Colonic mucosa (tissue), 4 donors: ENCODE measurements at regions of chr1 and their contacts with region 1.

Region 1: GRCh38 chr1:172745014-172745413 is 86.1 kb downstream of the FASLG start:
- DNase-seq: peak; percentile 53
- H3K4me3 ChIP-seq: no peak overlapping the region
- H3K27ac ChIP-seq: no peak overlapping the region
- H3K4me1 ChIP-seq: peaks cover 4% of the 10 kb centered on the region
- H3K27me3 ChIP-seq: no peaks in the 10 kb centered on the region
- CTCF ChIP-seq: peak; percentile 60

Region 2: DNA sequence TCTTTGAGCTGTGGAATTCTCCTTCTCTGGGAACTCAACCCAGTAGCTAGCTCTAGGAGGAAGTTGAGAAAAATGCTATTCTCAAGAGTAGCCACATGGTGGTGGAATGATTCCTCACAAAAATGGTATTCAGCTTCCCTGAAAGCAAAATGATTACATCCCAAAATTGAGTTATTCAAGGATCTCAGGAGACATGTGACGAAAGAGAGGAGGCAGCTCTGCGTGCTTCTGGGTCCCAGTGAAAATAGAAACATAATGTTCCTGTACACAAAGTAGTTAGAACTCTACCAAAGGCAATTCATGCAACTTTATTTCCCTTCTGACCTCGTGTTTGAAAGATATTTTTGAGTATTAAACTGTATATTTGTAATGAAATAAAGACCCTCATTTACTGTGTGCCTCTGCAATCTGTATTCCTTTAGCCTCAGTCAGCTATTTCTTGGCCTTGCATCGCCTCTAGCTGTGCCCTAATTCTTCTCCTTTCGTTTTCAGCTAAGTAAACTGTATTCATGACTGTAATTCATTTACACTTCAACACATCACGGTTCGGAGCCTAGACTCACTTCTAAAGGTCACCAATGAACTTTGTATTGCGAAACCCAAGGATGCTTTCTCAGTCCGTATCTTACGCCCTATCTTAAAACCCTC is 81.2 kb after region 1 on chr1:
- intact Hi-C with region 1: loop called (anchors 2 kb)
- DNase-seq: peak; percentile 23
- H3K4me3 ChIP-seq: no peak overlapping the region
- H3K27ac ChIP-seq: peak overlapping the region; percentile 13
- H3K4me1 ChIP-seq: no peaks in the 10 kb centered on the region
- H3K27me3 ChIP-seq: no peaks in the 10 kb centered on the region
- CTCF ChIP-seq: peak; percentile 41

Region 3: DNA sequence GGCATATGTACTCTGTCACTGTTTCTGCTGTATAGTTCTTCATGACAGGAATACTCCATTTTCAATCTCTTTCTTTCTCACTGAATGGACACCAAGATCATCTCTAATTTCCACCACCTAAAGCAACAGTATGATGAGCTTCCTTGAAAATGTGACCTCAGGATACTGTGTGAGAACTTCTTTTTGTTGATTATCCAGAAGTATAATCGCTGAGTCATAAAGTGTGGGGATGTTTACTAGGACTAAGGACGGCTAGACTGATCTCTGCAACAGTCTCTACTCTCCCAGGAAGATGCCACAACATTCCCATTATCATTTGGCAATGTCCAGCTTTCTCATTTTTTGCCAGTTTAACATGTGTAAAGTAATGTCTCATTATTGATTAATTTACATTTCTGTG is 235.4 kb after region 1 on chr1:
- intact Hi-C with region 1: no loop called
- DNase-seq: no peak
- H3K4me3 ChIP-seq: no peak overlapping the region
- H3K27ac ChIP-seq: no peak overlapping the region
- H3K4me1 ChIP-seq: no peaks in the 10 kb centered on the region
- H3K27me3 ChIP-seq: no peaks in the 10 kb centered on the region
- CTCF ChIP-seq: no peak

Region 4: GRCh38 chr1:173202430-173203145 is 457.6 kb after region 1 on chr1:
- intact Hi-C with region 1: loop called (anchors 2 kb)
- DNase-seq: peak; percentile 38
- H3K4me3 ChIP-seq: no peak overlapping the region
- H3K27ac ChIP-seq: no peak overlapping the region
- H3K4me1 ChIP-seq: no peaks in the 10 kb centered on the region
- H3K27me3 ChIP-seq: no peaks in the 10 kb centered on the region
- CTCF ChIP-seq: peak; percentile 38

Region 5: GRCh38 chr1:173409613-173410012 is 664.6 kb after region 1 on chr1:
- intact Hi-C with region 1: loop called (anchors 10 kb)
- DNase-seq: no peak
- H3K4me3 ChIP-seq: no peak overlapping the region
- H3K27ac ChIP-seq: no peak overlapping the region
- H3K4me1 ChIP-seq: no peaks in the 10 kb centered on the region
- H3K27me3 ChIP-seq: no peaks in the 10 kb centered on the region
- CTCF ChIP-seq: no peak

Region 6: DNA sequence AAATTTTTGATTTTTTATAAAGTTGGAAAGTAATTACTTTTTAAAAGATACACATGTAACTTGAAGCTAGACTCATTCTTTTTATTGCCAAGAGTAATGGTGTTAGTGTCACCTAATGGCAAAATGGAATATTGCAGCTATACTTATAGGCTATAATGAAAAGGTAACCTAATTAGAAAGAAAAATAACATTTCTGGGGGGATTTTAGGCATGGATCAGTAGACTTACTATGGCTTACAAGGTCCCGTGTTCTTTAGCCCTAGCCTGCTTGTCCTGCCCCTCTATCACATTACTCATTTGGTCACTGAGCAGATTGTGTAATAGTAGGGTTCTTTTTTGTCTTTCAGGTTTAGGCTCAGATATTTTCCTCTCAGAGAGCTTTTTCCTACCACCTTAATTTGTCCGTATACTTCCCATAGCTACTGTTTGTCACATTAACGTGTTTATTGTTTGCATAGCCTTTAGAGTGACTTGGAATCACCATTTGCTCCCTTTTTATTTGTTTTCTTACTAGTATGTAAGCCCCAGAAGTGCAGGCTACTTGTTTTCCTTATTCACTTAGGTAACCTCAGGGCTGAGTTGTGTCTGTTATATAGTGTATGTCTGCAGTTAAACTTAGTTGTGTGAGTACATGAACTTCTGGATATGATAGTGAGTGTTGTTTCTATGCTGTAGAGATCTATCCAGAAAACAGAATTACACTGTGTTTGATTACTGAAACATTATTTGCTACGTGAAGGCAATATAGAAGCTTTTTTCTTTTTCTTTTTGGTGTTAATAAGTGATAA is 1473.0 kb after region 1 on chr1:
- intact Hi-C with region 1: loop called (anchors 10 kb)
- DNase-seq: no peak
- H3K4me3 ChIP-seq: no peak overlapping the region
- H3K27ac ChIP-seq: no peak overlapping the region
- H3K4me1 ChIP-seq: no peaks in the 10 kb centered on the region
- H3K27me3 ChIP-seq: no peaks in the 10 kb centered on the region
- CTCF ChIP-seq: peak; percentile 62